Common myeloid progenitor, CD34-positive (primary cell): ENCODE measurements at regions of chr5 and their contacts with region 1.

Region 1: DNA sequence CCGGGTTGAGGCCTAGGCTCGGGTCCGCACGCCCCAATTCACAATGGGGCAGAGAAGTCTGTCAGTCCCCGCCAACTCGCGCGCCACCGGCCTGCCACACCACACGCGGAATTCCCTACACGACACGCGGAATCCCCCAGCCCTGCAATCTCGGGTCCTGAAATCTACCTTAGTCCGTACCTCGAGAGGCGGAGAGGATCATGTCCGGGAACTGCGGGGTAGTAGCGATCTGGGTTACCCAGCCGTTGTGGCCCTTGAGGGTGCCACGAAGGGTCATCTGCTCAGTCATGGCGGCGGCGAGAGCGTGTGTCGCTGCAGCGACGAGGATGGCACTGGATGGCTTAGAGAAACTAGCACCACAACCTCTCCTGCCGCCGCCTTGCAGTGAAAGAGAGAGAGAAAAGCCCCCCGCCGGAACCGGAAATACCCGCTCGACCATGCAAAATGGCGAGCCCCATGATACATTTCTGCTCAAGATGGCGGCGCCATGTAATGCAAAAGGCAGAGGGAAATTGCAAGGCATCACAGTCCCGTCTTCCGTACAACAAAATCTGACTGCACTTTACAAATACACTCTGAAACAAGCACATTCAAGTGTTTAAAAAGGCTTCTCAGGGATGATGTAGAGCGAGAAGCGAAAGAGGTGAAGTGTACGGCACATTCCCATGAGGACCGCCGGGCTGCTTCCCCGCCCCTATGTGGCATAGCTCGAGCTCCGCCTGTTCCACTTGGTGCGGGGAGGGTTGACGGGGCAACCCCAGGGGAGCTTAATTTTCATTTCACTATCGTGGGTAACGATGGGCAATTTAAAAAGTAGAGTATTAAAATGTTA is at the start of gene RACK1:
- DNase-seq: peak; percentile 93 to 96 (median 95)
- H3K4me3 ChIP-seq: peak within 1 kb of the TSS; percentile 58 to 99 (median 98)
- H3K27ac ChIP-seq: peak within 1 kb of the TSS; percentile 92 to 96
- H3K4me1 ChIP-seq: peaks cover 15 to 58% (median 49%) of the 10 kb centered on the region in 4 experiments
- H3K27me3 ChIP-seq: no peaks in the 10 kb centered on the region

Region 2: GRCh38 chr5:181204824-181205760 is 38.6 kb before region 1 on chr5 and contains the start of gene TRIM7:
- CTCF ChIA-PET with region 1: no interaction called
- POLR2A ChIA-PET with region 1: no interaction called
- DNase-seq: no peak
- H3K4me3 ChIP-seq: peak within 1 kb of the TSS; percentile 39 to 83 (median 73)
- H3K27ac ChIP-seq: no peak within 1 kb of the TSS
- H3K4me1 ChIP-seq: peaks cover 1 to 41% (median 34%) of the 10 kb centered on the region in 4 experiments
- H3K27me3 ChIP-seq: peaks cover 0 to 49% (median 15%) of the 10 kb centered on the region in 5 experiments

Region 3: DNA sequence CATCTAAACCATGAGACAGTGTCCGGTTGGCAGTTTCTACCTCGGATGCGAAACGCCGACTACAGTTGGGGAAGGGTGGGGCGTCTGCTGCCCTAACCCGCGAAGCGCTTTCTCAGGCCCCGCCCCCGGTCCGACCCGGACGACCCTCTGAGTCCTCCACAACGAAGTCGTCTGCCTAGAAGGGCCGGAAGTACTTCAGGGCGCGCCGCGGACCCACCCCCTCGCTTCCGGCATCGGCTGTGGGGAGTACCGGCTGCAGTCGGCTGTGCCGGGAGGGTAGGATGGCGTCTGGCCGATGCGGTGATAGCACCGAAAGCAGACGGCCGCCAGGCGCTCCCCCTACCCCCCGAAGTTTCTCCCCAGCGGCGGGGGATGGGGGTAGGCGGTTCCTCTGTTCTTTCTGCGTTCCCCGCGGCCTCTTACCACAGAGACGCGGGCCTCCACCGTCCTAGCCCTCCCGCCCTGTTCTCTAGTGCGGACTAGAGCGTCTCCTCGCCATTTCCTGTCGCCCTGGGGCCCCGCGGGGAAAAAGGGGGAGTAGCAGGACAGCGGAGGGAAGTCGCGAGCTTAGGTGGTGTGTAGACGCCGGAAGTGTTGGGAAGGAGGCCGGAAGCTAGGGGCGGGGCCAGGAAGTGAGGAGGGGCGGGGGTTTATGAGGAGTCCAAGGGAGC is 20.5 kb before region 1 on chr5 and contains the start of gene TRIM41:
- CTCF ChIA-PET with region 1: interaction called, 8 read pairs
- POLR2A ChIA-PET with region 1: interaction called, 27 read pairs
- DNase-seq: peak; percentile 99
- H3K4me3 ChIP-seq: peak within 1 kb of the TSS; percentile 70 to 95 (median 89)
- H3K27ac ChIP-seq: peak within 1 kb of the TSS; percentile 90 to 93
- H3K4me1 ChIP-seq: peaks cover 3 to 39% (median 24%) of the 10 kb centered on the region in 4 experiments
- H3K27me3 ChIP-seq: no peaks in the 10 kb centered on the region